Posterior cingulate gyrus (tissue), 11 donors: ENCODE measurements at regions of chr1 and their contacts with region 1.

Region 1: GRCh38 chr1:94061513-94062443 is 59.2 kb downstream of the ABCA4 start:
- DNase-seq: peak in 7 of 10 donors; percentile 45 to 89 (median 62)

Region 2: GRCh38 chr1:93919780-93920179 is 142.0 kb before region 1 on chr1:
- intact Hi-C with region 1: no loop called
- DNase-seq: no peak

Region 3: DNA sequence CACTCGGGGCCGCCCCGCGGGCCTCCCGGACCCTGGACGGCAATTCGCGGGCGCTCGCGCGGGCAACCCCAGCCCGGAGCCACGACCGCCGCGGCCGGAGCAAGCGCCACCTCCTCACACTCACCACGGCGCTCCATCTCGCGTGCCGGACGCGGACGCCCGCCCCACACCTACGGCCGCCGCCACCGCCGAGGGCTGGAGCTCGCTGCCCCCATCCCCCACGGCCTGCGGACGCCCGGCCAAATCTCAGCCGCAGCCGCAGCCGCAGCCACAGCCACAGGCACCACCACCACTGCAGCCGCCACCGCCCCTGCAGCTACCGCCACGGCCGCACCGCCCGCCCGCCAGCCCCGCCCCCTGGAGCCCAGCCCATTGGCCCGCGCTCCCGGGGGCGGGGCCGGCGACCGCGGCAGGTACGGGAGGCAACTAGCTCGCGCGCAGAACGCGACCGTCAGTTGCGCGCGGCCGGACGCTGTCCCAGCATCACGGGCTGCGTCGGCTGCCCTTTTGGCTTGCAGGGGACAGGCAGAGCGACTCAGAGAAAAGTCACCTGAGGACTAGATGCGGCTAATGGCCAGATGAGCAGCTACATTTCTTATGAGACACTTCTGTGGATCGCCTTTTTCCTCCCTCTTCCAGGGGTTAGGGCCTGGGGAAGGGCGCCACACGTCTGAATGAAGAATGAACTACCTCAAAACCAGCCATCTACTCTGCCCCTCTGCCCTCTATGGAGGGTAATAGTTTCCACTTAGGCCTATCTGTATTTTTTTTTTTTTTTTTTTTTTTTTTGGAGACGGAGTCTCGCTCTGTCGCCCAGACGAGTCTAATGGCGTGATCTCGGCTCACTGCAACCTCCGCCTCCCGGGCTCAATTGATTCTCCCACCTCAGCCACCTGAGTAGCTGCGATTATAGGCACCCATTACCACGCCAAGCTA is 175.8 kb after region 1 on chr1 and contains the start of gene ARHGAP29:
- intact Hi-C with region 1: loop called (anchors 10 kb)
- DNase-seq: peak in 9 of 10 donors; percentile 27 to 93 (median 53)